ENCODE measurements at regions of chr2 and their contacts with region 1.

Region 1: GRCh38 chr2:54675738-54676137 is 47.7 kb upstream of the EML6 start:
- DNase-seq: no peak
- ATAC-seq: no peak
- H3K4me3 ChIP-seq: no peak overlapping the region
- H3K4me3 Mint-ChIP-seq: no peak overlapping the region
- H3K27ac ChIP-seq: no peak overlapping the region
- H3K27ac Mint-ChIP-seq: no peak overlapping the region
- H3K4me1 ChIP-seq: no peaks in the 10 kb centered on the region
- H3K4me1 Mint-ChIP-seq: peaks cover 17% of the 10 kb centered on the region
- H3K27me3 ChIP-seq: no peaks in the 10 kb centered on the region
- H3K27me3 Mint-ChIP-seq: peaks cover 4% of the 10 kb centered on the region
- CTCF ChIP-seq: no peak

Region 2: GRCh38 chr2:53508667-53509066 is 1167.1 kb before region 1 on chr2:
- CTCF ChIA-PET with region 1: no interaction called
- POLR2A ChIA-PET with region 1: no interaction called
- intact Hi-C with region 1: loop called in 1 of 2 experiments (anchors 5 kb)
- DNase-seq: no peak
- ATAC-seq: no peak
- H3K4me3 ChIP-seq: no peak overlapping the region
- H3K4me3 Mint-ChIP-seq: no peak overlapping the region
- H3K27ac ChIP-seq: no peak overlapping the region
- H3K27ac Mint-ChIP-seq: no peak overlapping the region
- H3K4me1 ChIP-seq: no peaks in the 10 kb centered on the region
- H3K4me1 Mint-ChIP-seq: no peaks in the 10 kb centered on the region
- H3K27me3 ChIP-seq: no peaks in the 10 kb centered on the region
- H3K27me3 Mint-ChIP-seq: peaks cover 2% of the 10 kb centered on the region
- CTCF ChIP-seq: no peak

Measured in CD8-positive, alpha-beta T cell (primary cell).